Activated B cell treated with CpG ODN at 0.5 μM for 24 hours (primary cell): ENCODE measurements at regions of chr13 and their contacts with region 1.

Region 1: GRCh38 chr13:102580552-102581169 is 16.1 kb upstream of the TPP2 start:
- DNase-seq: no peak
- ATAC-seq: peak; percentile 66
- H3K4me3 Mint-ChIP-seq: no peak overlapping the region
- H3K27ac Mint-ChIP-seq: no peak overlapping the region
- H3K4me1 Mint-ChIP-seq: peaks cover 9% of the 10 kb centered on the region
- H3K27me3 Mint-ChIP-seq: peaks cover 7% of the 10 kb centered on the region
- CTCF ChIP-seq: peak; percentile 43

Region 2: DNA sequence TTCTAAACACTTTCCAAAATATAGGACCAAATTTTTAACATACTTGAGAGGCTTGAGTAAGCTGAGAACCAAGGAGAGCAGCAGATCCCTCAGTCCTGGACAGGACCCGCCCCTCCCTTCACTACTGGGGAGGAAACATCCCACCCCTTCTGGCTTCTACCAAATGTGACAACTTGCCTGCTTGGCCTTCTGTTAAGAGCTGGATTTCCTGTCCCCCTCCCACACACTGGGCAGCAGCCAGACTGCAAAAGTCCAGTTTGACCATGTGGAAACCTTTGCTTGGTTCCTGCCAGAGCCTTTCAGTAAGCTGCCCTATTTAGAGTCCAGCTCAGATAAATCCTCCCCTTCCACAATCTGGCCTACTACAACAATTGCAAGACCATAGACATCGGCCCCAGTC is 263.1 kb before region 1 on chr13:
- CTCF ChIA-PET with region 1: no interaction called
- POLR2A ChIA-PET with region 1: no interaction called
- intact Hi-C with region 1: no loop called
- DNase-seq: no peak
- ATAC-seq: no peak
- H3K4me3 Mint-ChIP-seq: no peak overlapping the region
- H3K27ac Mint-ChIP-seq: no peak overlapping the region
- H3K4me1 Mint-ChIP-seq: no peaks in the 10 kb centered on the region
- H3K27me3 Mint-ChIP-seq: no peaks in the 10 kb centered on the region
- CTCF ChIP-seq: no peak

Region 3: DNA sequence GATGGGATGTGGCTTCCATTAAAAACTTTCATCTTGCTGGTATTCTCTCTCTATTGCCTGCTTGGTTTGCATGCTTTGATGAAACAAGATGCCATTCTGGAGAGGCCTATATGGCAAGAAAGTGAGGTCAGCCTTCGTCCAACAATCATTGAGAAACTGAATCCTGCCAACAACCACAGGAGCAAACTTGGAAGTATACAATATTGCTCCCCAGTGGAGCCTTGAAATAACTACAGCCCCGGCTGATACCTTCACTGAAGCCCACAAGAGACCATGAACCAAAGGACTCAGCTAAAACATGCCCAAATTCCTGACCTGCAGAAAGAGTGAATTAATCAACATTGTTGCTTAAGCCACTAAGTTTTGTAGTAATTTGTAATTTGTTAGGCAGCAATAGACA is 96.3 kb before region 1 on chr13:
- CTCF ChIA-PET with region 1: no interaction called
- POLR2A ChIA-PET with region 1: no interaction called
- intact Hi-C with region 1: no loop called
- DNase-seq: no peak
- ATAC-seq: no peak
- H3K4me3 Mint-ChIP-seq: no peak overlapping the region
- H3K27ac Mint-ChIP-seq: no peak overlapping the region
- H3K4me1 Mint-ChIP-seq: no peaks in the 10 kb centered on the region
- H3K27me3 Mint-ChIP-seq: peaks cover 8% of the 10 kb centered on the region
- CTCF ChIP-seq: no peak

Region 4: GRCh38 chr13:102596147-102597028 is 15.7 kb after region 1 on chr13 and contains the start of gene TPP2:
- CTCF ChIA-PET with region 1: interaction called, 7 read pairs
- POLR2A ChIA-PET with region 1: interaction called, 5 read pairs
- intact Hi-C with region 1: loop called (anchors 1 kb)
- DNase-seq: peak; percentile 97
- ATAC-seq: peak; percentile 92
- H3K4me3 Mint-ChIP-seq: peak within 1 kb of the TSS; percentile 96
- H3K27ac Mint-ChIP-seq: peak within 1 kb of the TSS; percentile 98
- H3K4me1 Mint-ChIP-seq: peaks cover 60% of the 10 kb centered on the region
- H3K27me3 Mint-ChIP-seq: no peaks in the 10 kb centered on the region
- CTCF ChIP-seq: no peak
- total RNA-seq, gene TPP2: 43.7 and 53.1 TPM in 2 replicates

Region 5: GRCh38 chr13:102657630-102658029 is 77.0 kb after region 1 on chr13:
- CTCF ChIA-PET with region 1: no interaction called
- POLR2A ChIA-PET with region 1: no interaction called
- intact Hi-C with region 1: loop called (anchors 5 kb)
- DNase-seq: no peak
- ATAC-seq: no peak
- H3K4me3 Mint-ChIP-seq: no peak overlapping the region
- H3K27ac Mint-ChIP-seq: no peak overlapping the region
- H3K4me1 Mint-ChIP-seq: no peaks in the 10 kb centered on the region
- H3K27me3 Mint-ChIP-seq: no peaks in the 10 kb centered on the region
- CTCF ChIP-seq: no peak

Region 6: DNA sequence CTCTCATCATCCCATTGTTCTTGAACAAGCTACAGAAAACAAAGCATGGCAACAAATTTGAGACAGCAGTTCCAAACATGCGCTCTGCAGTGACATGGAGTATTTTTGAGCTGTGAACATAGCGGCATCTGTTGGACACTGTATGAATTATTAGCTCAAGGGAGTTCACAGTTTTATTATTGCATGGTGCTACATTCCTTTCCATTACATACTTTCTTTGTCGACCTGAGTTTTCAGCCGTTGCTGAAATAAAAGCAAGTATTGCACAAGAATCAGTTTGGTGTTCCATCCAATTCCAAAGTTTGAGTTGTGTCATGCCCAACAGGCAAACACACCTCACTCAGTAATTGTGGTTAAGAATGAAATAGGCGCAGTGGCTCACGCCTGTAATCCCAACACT is 144.3 kb after region 1 on chr13:
- CTCF ChIA-PET with region 1: interaction called, 4 read pairs
- POLR2A ChIA-PET with region 1: no interaction called
- intact Hi-C with region 1: loop called (anchors 1 kb)
- DNase-seq: no peak
- ATAC-seq: no peak
- H3K4me3 Mint-ChIP-seq: no peak overlapping the region
- H3K27ac Mint-ChIP-seq: no peak overlapping the region
- H3K4me1 Mint-ChIP-seq: no peaks in the 10 kb centered on the region
- H3K27me3 Mint-ChIP-seq: peaks cover 7% of the 10 kb centered on the region
- CTCF ChIP-seq: no peak

Region 7: GRCh38 chr13:102800145-102801041 is 219.7 kb after region 1 on chr13:
- CTCF ChIA-PET with region 1: interaction called, 5 read pairs
- POLR2A ChIA-PET with region 1: no interaction called
- intact Hi-C with region 1: loop called (anchors 1 kb)
- DNase-seq: peak; percentile 79
- ATAC-seq: peak; percentile 89
- H3K4me3 Mint-ChIP-seq: peak overlapping the region; percentile 85
- H3K27ac Mint-ChIP-seq: no peak overlapping the region
- H3K4me1 Mint-ChIP-seq: peaks cover 18% of the 10 kb centered on the region
- H3K27me3 Mint-ChIP-seq: peaks cover 7% of the 10 kb centered on the region
- CTCF ChIP-seq: no peak